HepG2 (cell line): ENCODE measurements at regions of chr3 and their contacts with region 1.

Region 1: GRCh38 chr3:67790043-67790442 is 135.6 kb upstream of the SUCLG2 start:
- DNase-seq: peak; percentile 52
- ATAC-seq: peak; percentile 97
- H3K4me3 ChIP-seq: no peak overlapping the region
- H3K27ac ChIP-seq: no peak overlapping the region
- H3K4me1 ChIP-seq: no peaks in the 10 kb centered on the region
- H3K27me3 ChIP-seq: no peaks in the 10 kb centered on the region
- CTCF ChIP-seq: peak; percentile 85
- EP300 ChIP-seq: no peak
- POLR2A ChIP-seq: no peak
- RAD21 ChIP-seq: peak; percentile 63

Region 2: GRCh38 chr3:66572938-66573710 is 1216.9 kb before region 1 on chr3:
- CTCF ChIA-PET with region 1: no interaction called
- POLR2A ChIA-PET with region 1: no interaction called
- in situ Hi-C with region 1: no loop called
- intact Hi-C with region 1: no loop called
- DNase-seq: peak; percentile 8
- ATAC-seq: peak; percentile 90
- H3K4me3 ChIP-seq: no peak overlapping the region
- H3K27ac ChIP-seq: no peak overlapping the region
- H3K4me1 ChIP-seq: no peaks in the 10 kb centered on the region
- H3K27me3 ChIP-seq: no peaks in the 10 kb centered on the region
- CTCF ChIP-seq: peak; percentile 59
- EP300 ChIP-seq: no peak
- POLR2A ChIP-seq: no peak
- RAD21 ChIP-seq: 0 out of 2 replicates have a peak, but pooled peaks have one; percentile 33

Region 3: GRCh38 chr3:67384760-67385397 is 405.2 kb before region 1 on chr3:
- CTCF ChIA-PET with region 1: interaction called, 12 read pairs
- POLR2A ChIA-PET with region 1: no interaction called
- in situ Hi-C with region 1: loop called (anchors 5 kb)
- intact Hi-C with region 1: loop called (anchors 1 kb)
- DNase-seq: peak; percentile 23
- ATAC-seq: peak; percentile 82
- H3K4me3 ChIP-seq: no peak overlapping the region
- H3K27ac ChIP-seq: no peak overlapping the region
- H3K4me1 ChIP-seq: no peaks in the 10 kb centered on the region
- H3K27me3 ChIP-seq: no peaks in the 10 kb centered on the region
- CTCF ChIP-seq: peak; percentile 64
- EP300 ChIP-seq: no peak
- POLR2A ChIP-seq: no peak
- RAD21 ChIP-seq: no peak

Region 4: DNA sequence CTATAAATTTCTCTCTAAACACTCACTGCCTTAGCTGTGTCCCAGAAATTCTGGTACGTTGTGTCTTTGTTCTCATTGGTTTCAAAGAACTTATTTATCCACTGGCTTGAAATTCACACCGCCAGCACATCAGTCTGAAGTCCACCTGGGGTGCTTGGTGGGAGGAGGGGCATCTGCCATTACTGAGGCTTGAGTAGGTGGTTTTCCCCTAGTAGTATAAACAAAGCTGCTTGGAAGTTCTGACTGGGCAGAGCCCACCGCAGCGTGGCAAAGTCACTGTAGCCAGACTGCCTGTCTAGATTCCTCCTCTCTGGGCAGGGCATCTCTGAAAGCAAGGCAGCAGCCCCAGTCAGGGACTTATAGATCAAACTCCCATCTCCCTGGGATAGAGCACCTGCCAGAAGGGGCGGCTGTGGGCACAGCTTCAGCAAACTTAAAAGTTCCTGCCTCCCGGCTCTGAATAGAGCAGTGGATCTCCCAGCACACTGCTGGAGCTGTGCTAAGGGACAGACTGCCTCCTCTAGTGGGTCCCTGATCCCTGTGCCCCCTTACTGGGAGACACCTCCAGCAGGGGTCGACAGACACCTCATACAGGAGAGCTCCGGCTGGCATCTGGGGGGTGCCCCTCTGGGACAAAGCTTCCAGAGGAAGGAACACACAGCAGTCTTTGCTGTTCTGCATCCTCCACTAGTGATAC is 249.7 kb before region 1 on chr3:
- CTCF ChIA-PET with region 1: no interaction called
- POLR2A ChIA-PET with region 1: no interaction called
- in situ Hi-C with region 1: no loop called
- intact Hi-C with region 1: loop called (anchors 1 kb)
- DNase-seq: peak; percentile 81
- ATAC-seq: peak; percentile 98
- H3K4me3 ChIP-seq: peak overlapping the region in 1 of 3 experiments; percentile 40; a peak in 2 of 6 replicates
- H3K27ac ChIP-seq: peak overlapping the region; percentile 60
- H3K4me1 ChIP-seq: peaks cover 28% of the 10 kb centered on the region
- H3K27me3 ChIP-seq: no peaks in the 10 kb centered on the region
- CTCF ChIP-seq: peak; percentile 68
- EP300 ChIP-seq: 0 out of 4 replicates have a peak, but pooled peaks of 1 of the 2 experiments have one; percentile 25
- POLR2A ChIP-seq: no peak
- RAD21 ChIP-seq: 0 out of 2 replicates have a peak, but pooled peaks have one; percentile 18

Region 5: DNA sequence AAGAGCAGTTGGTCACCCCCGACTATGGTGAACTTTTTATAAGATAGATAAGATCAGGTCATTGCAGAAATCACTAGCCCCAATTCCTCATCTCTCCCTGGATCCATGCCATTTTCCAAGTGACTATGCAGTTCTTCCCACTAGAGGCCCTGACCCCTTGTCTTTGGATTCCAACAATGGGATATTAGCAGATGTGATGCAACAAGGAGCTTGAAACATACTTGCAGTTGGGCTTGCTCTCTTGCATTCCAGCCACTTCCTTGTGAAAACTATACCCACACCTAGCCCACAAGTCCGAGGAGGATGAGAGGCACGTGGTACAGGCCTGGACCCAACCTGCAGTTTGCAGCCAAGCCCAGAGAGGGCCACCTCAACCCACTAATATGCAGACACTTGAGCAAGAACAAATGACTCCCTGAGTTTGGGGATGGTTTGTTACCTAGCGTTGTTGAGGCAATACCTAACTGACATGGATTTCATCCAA is 196.2 kb before region 1 on chr3:
- CTCF ChIA-PET with region 1: interaction called, 5 read pairs
- POLR2A ChIA-PET with region 1: no interaction called
- in situ Hi-C with region 1: loop called (anchors 25 kb)
- intact Hi-C with region 1: loop called (anchors 1 kb)
- DNase-seq: peak; percentile 14
- ATAC-seq: peak; percentile 88
- H3K4me3 ChIP-seq: no peak overlapping the region
- H3K27ac ChIP-seq: no peak overlapping the region
- H3K4me1 ChIP-seq: peaks cover 29% of the 10 kb centered on the region
- H3K27me3 ChIP-seq: no peaks in the 10 kb centered on the region
- CTCF ChIP-seq: peak; percentile 38
- EP300 ChIP-seq: no peak
- POLR2A ChIP-seq: no peak
- RAD21 ChIP-seq: peak; percentile 41

Region 6: DNA sequence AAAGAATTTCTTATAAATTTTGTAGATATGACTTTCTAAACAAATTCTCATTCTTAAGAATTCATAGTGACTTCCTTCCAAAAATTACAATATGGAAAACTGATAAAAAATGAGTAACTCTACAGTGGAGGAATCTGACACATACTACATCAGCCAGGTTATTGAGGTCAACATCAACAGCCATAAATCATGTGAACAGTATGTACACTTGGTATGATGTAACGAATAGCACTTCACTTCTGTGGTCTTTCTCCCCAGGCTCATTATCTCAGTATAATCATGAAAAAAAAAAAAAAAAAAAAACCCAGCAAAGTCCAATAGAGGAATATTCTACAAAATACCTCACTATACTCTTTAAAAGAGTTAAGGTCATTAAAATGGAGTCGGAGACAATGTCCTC is 24.5 kb before region 1 on chr3:
- CTCF ChIA-PET with region 1: no interaction called
- POLR2A ChIA-PET with region 1: no interaction called
- in situ Hi-C with region 1: no loop called
- intact Hi-C with region 1: no loop called
- DNase-seq: no peak
- ATAC-seq: no peak
- H3K4me3 ChIP-seq: no peak overlapping the region
- H3K27ac ChIP-seq: no peak overlapping the region
- H3K4me1 ChIP-seq: no peaks in the 10 kb centered on the region
- H3K27me3 ChIP-seq: no peaks in the 10 kb centered on the region; a peak in 1 of 5 replicates
- CTCF ChIP-seq: no peak
- EP300 ChIP-seq: no peak
- POLR2A ChIP-seq: no peak
- RAD21 ChIP-seq: no peak